ENCODE measurements at regions of chr1 and their contacts with region 1.

Region 1: DNA sequence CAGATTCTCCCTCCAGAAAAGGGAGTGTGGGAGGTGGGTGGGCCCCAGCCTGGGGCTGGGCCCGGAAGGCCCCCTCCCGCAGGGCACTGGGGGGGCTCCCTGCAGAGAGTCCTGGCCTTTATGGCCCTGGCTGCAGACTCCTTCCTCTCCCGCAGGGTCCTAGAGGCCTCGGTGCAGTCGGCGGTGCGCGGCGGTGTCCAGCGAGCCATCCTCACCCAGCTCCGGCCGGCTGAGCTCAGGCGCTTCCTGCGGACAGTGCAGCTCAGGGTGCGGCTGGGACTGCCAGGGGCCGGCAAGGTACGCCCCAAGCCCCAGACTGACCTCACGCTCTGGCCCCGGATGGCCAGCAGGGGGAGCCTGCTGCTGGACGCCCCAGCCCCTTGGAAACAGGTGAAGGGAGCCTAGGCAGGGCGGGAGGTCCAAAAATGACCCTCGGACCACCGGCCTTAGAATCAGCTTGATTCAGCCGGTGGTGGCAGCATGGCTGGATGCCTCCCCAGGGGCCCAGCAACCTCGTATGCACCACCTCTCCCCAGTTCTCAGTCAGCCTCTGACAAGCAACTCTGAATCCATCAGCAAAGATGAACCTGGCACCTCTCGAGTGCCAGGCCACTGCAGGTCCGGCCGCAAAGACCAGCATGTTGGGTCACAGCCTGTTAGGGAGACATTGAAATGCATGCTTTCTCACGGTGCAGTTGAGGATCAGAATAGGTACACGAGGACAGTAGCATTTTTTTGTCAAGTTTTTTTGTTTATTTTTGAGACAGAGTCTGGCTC is 20.6 kb downstream of the MTHFR start:
- DNase-seq: peak; percentile 55
- ATAC-seq: peak; percentile 86
- H3K4me3 Mint-ChIP-seq: peak overlapping the region; percentile 44
- H3K27ac Mint-ChIP-seq: peak overlapping the region; percentile 71
- H3K4me1 Mint-ChIP-seq: peaks cover 22% of the 10 kb centered on the region
- H3K27me3 Mint-ChIP-seq: no peaks in the 10 kb centered on the region
- CTCF ChIP-seq: peak; percentile 88

Region 2: DNA sequence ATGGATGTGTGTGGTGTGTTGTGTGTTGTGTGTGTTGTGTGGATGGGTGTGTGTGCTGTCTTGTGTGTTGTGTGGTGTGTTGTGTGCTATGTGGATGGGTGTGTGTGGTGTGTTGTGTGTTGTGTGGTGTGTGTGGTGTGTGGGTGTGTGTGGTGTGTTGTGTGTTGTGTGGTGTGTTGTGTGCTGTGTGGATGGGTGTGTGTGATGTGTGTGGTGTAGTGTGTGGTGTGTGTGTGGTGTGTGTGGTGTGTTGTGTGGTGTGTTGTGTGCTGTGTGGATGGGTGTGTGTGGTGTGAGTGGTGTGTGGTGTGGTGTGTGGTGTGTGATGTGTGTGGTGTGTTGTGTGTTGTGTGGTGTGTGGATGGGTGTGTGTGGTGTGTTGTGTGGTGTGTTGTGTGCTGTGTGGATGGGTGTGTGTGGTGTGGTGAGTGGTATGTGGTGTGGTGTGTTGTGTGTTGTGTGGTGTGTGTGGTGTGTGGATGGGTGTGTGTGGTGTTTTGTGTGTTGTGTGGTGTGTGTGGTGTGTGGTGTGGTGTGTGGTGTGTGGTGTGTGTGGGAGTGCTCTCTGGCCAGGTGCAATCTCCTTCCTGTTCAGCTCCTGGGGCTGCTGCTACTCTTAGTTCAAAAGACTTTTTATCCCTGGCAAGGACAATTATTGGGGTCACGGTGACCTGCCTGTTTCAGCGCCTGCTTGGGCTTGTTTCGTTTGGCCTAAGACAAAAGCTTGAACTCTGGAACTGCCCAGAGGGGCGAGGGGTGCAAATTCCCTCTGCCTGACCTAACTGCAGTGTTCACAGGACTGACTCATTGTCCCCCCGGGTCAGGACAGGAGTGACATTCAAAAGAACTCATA is 411.1 kb before region 1 on chr1:
- CTCF ChIA-PET with region 1: no interaction called
- POLR2A ChIA-PET with region 1: interaction called, 18 read pairs
- intact Hi-C with region 1: no loop called
- DNase-seq: no peak
- ATAC-seq: no peak
- H3K4me3 Mint-ChIP-seq: no peak overlapping the region
- H3K27ac Mint-ChIP-seq: no peak overlapping the region
- H3K4me1 Mint-ChIP-seq: peaks cover 22% of the 10 kb centered on the region
- H3K27me3 Mint-ChIP-seq: peaks cover 8% of the 10 kb centered on the region
- CTCF ChIP-seq: no peak

Region 3: DNA sequence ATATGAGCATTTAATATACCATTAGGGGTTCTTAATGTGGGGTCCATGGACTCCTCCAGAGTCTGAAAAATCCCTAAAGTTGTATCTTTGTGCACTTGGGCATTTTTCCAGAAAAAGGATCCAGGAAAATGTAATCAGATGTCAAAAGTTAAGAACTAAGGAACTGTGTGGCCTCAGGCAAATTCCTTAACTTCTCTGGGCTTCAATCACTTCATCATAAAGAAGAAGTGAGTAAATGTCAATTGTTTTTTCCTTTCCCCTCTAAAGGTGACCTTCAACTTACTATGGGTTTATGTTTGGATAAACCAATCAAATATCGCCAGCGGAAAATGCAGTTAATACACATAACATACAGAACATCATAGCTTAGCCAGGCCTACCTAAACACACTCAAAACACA is 106.7 kb before region 1 on chr1:
- CTCF ChIA-PET with region 1: no interaction called
- POLR2A ChIA-PET with region 1: no interaction called
- intact Hi-C with region 1: no loop called
- DNase-seq: no peak
- ATAC-seq: no peak
- H3K4me3 Mint-ChIP-seq: peak overlapping the region; percentile 5
- H3K27ac Mint-ChIP-seq: no peak overlapping the region
- H3K4me1 Mint-ChIP-seq: peaks cover 19% of the 10 kb centered on the region
- H3K27me3 Mint-ChIP-seq: no peaks in the 10 kb centered on the region
- CTCF ChIP-seq: no peak

Region 4: DNA sequence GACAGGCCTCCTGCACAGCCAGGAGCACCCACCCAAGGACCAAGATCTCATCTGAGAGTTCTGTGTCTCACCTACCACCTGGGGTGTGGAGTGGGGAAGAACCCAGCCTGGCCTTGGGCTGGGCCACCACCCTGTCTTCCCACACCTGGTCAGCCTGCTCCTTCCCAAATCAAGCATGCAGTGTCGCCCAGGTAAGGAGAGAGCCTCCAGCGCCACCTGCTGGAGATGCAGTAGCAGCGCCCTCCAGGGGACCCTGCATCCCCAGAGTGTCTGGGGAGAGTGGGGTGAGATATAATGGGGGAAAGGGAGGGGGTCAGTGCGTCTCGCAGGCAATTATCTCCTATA is 108.7 kb after region 1 on chr1:
- CTCF ChIA-PET with region 1: interaction called, 3 read pairs
- POLR2A ChIA-PET with region 1: no interaction called
- intact Hi-C with region 1: loop called (anchors 1 kb)
- DNase-seq: peak; percentile 63
- ATAC-seq: peak; percentile 84
- H3K4me3 Mint-ChIP-seq: no peak overlapping the region
- H3K27ac Mint-ChIP-seq: no peak overlapping the region
- H3K4me1 Mint-ChIP-seq: no peaks in the 10 kb centered on the region
- H3K27me3 Mint-ChIP-seq: peaks cover 17% of the 10 kb centered on the region
- CTCF ChIP-seq: no peak

Measured in activated B cell treated with CpG ODN at 0.5 μM for 24 hours (primary cell).